ENCODE measurements at regions of chr19 and their contacts with region 1.

Region 1: GRCh38 chr19:49502866-49503581 is 6.8 kb downstream of the RPS11 start:
- DNase-seq: no peak
- H3K4me3 ChIP-seq: no peak overlapping the region
- H3K27ac ChIP-seq: no peak overlapping the region
- H3K4me1 ChIP-seq: no peaks in the 10 kb centered on the region
- H3K27me3 ChIP-seq: no peaks in the 10 kb centered on the region
- CTCF ChIP-seq: peak in 3 of 4 experiments; percentile 72 to 79 (median 78)
- POLR2A ChIP-seq: no peak

Region 2: GRCh38 chr19:49546825-49547565 is 44.0 kb after region 1 on chr19:
- intact Hi-C with region 1: loop called (anchors 1 kb)
- DNase-seq: peak; percentile 86
- H3K4me3 ChIP-seq: no peak overlapping the region
- H3K27ac ChIP-seq: no peak overlapping the region
- H3K4me1 ChIP-seq: no peaks in the 10 kb centered on the region
- H3K27me3 ChIP-seq: no peaks in the 10 kb centered on the region
- CTCF ChIP-seq: peak; percentile 65 to 93 (median 91)
- POLR2A ChIP-seq: no peak